CD4-positive, alpha-beta memory T cell (primary cell): ENCODE measurements at regions of chr11 and their contacts with region 1.

Region 1: DNA sequence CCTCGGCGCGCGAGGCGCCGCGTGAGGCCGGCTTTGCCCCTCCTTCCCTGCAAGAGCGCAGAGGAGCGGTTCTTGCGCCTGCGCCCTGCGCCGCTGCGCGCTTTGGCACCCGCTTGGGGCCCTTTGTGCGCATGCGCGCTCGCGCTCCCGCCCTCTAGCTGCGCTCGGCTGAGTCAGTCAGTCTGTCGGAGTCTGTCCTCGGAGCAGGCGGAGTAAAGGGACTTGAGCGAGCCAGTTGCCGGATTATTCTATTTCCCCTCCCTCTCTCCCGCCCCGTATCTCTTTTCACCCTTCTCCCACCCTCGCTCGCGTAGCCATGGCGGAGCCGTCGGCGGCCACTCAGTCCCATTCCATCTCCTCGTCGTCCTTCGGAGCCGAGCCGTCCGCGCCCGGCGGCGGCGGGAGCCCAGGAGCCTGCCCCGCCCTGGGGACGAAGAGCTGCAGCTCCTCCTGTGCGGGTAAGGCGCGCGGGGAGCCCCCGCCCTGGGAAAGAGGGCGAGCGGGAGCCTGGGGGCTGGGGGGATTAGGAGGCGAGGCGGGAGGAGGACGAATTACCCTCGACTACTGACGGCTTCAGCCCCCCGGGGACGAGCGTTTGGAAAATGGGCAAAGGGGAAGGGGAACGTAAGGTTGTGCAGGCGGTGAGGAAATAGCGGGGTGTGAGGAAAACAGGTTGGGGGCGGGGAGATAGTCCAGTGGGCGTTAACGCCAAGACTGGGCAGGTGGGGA is at the start of gene RTN3:
- DNase-seq: peak; percentile 98 to 99 (median 98)
- H3K4me3 ChIP-seq: peak within 1 kb of the TSS; percentile 54 to 93
- H3K4me3 Mint-ChIP-seq: peak within 1 kb of the TSS; percentile 89 to 98 (median 92)
- H3K27ac ChIP-seq: peak within 1 kb of the TSS; percentile 86
- H3K27ac Mint-ChIP-seq: peak within 1 kb of the TSS; percentile 71 to 98 (median 91)
- H3K4me1 ChIP-seq: peaks cover 22% of the 10 kb centered on the region
- H3K4me1 Mint-ChIP-seq: peaks cover 18 to 30% (median 24%) of the 10 kb centered on the region in 4 donors
- H3K27me3 ChIP-seq: no peaks in the 10 kb centered on the region
- H3K27me3 Mint-ChIP-seq: peaks cover 0 to 1% of the 10 kb centered on the region in 2 donors
- total RNA-seq, gene RTN3: 41.7 to 41.8 TPM

Region 2: DNA sequence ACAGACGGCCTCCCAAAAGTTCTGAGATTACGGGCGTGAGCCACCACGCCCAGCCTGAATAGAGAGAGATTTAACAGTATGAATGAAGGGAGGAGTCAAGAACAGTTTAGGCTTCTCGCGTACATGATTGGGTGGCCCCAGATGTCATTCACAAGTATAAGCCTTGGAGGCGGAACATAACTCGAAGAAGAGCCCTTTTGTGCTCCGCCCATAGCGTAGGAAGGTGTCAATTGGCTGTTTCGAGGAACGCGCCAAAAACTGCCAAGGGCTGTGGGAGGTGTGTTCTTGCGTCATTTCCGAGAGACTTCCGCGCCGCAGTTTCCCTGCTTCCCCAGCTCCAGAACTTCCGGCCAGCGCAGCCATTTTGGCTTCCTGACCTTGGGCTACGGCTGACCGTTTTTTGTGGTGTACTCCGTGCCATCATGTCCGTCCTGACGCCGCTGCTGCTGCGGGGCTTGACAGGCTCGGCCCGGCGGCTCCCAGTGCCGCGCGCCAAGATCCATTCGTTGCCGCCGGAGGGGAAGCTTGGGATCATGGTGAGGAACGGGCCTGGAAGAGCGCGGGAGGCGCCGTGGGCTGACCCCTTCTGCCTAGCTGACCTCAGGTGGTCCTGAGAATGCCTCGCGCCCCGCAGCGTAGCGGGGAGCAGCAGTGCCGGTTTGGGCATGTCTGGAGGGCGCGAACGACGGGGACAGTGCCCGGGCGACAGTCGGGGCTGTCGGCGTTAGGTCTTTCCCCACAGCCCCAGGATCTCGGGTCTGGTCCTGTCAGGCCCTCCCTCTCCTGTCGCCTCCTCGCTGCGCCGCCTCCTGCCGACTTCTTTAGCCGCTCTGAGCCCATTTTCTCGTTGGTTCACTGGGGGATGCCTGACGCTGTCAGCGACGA is 293.0 kb after region 1 on chr11 and contains the start of gene COX8A:
- CTCF ChIA-PET with region 1: no interaction called
- POLR2A ChIA-PET with region 1: no interaction called
- intact Hi-C with region 1: loop called (anchors 1 kb)
- DNase-seq: peak; percentile 94 to 98 (median 96)
- H3K4me3 ChIP-seq: peak within 1 kb of the TSS; percentile 90 to 100
- H3K4me3 Mint-ChIP-seq: peak within 1 kb of the TSS; percentile 96 to 100 (median 100)
- H3K27ac ChIP-seq: peak within 1 kb of the TSS; percentile 95
- H3K27ac Mint-ChIP-seq: peak within 1 kb of the TSS; percentile 99 to 100 (median 99)
- H3K4me1 ChIP-seq: peaks cover 20% of the 10 kb centered on the region
- H3K4me1 Mint-ChIP-seq: peaks cover 17 to 40% (median 31%) of the 10 kb centered on the region in 4 donors
- H3K27me3 ChIP-seq: no peaks in the 10 kb centered on the region
- H3K27me3 Mint-ChIP-seq: peaks cover 2% of the 10 kb centered on the region in 2 donors
- total RNA-seq, gene COX8A: 113 to 130 TPM